Activated CD4-positive, alpha-beta memory T cell treated with anti-CD3 and anti-CD28 coated beads, Interleukin-2, amount 10 ng/mL, durations not matched to agents 7 days and 5 days (primary cell): ENCODE measurements at regions of chr3 and their contacts with region 1.

Region 1: GRCh38 chr3:40476478-40477470 is at the start of gene ZNF619:
- DNase-seq: peak; percentile 66
- H3K4me3 Mint-ChIP-seq: peak within 1 kb of the TSS; percentile 81
- H3K27ac Mint-ChIP-seq: peak within 1 kb of the TSS; percentile 63
- H3K4me1 Mint-ChIP-seq: peaks cover 25% of the 10 kb centered on the region
- H3K27me3 Mint-ChIP-seq: no peaks in the 10 kb centered on the region
- total RNA-seq, gene ZNF619: 10.5 to 10.6 TPM

Region 2: GRCh38 chr3:40464339-40465110 is 12.2 kb before region 1 on chr3:
- CTCF ChIA-PET with region 1: interaction called, 3 read pairs
- POLR2A ChIA-PET with region 1: interaction called, 29 read pairs
- DNase-seq: no peak
- H3K4me3 Mint-ChIP-seq: no peak overlapping the region
- H3K27ac Mint-ChIP-seq: peak overlapping the region; percentile 71
- H3K4me1 Mint-ChIP-seq: peaks cover 45% of the 10 kb centered on the region
- H3K27me3 Mint-ChIP-seq: no peaks in the 10 kb centered on the region

Region 3: DNA sequence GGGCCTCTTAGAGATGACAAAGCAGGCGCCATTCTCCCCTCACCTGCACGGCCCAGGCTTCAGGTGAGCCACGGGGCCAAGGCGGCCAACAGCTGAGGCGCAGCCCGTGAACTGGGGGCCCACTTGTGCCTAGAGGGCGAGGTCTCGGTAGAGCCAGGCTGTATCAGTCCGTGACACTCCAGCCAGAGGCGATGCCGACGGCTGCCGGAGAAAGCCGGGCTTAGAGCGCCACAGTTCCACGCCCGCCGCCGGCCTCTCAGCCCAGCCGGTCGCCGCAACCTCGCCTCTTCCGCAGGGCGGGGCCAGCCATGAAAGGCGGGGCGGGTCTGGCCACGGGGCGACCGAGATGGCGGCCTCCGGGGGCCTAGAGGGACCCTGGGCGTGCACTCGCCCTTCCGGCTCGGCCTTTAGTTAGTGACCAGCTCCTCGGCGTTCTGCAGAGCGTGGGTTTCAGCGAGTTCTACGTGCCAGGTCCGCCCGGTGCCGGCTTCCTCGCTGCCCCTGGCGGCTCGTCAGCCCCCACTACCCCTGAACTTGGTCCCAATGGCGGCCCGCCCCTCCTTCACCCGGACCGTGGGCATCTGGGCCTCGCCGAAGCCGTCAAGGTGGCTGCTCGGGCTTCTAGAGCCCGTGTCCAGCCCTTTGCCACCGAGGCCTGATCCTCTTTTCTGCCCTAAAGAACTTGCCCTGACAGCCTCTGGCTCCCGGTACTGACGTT is 48.0 kb after region 1 on chr3 and contains the start of gene ZNF621:
- CTCF ChIA-PET with region 1: no interaction called
- POLR2A ChIA-PET with region 1: interaction called, 24 read pairs
- DNase-seq: peak; percentile 87
- H3K4me3 Mint-ChIP-seq: peak within 1 kb of the TSS; percentile 94
- H3K27ac Mint-ChIP-seq: peak within 1 kb of the TSS; percentile 84
- H3K4me1 Mint-ChIP-seq: peaks cover 32% of the 10 kb centered on the region
- H3K27me3 Mint-ChIP-seq: no peaks in the 10 kb centered on the region
- total RNA-seq, gene ZNF621: 24.9 to 25.7 TPM

Region 4: GRCh38 chr3:40580494-40581091 is 103.8 kb after region 1 on chr3:
- CTCF ChIA-PET with region 1: no interaction called
- POLR2A ChIA-PET with region 1: no interaction called
- DNase-seq: peak; percentile 68
- H3K4me3 Mint-ChIP-seq: no peak overlapping the region
- H3K27ac Mint-ChIP-seq: no peak overlapping the region
- H3K4me1 Mint-ChIP-seq: no peaks in the 10 kb centered on the region
- H3K27me3 Mint-ChIP-seq: peaks cover 5% of the 10 kb centered on the region